ENCODE measurements at regions of chr12 and their contacts with region 1.

Region 1: GRCh38 chr12:26884765-26885576 is 52.0 kb upstream of the ITPR2 start:
- DNase-seq: peak; percentile 42
- H3K4me3 ChIP-seq: no peak overlapping the region
- H3K27ac ChIP-seq: no peak overlapping the region
- H3K27me3 ChIP-seq: no peaks in the 10 kb centered on the region
- CTCF ChIP-seq: peak; percentile 99

Region 2: GRCh38 chr12:25875666-25876065 is 1009.3 kb before region 1 on chr12:
- CTCF ChIA-PET with region 1: no interaction called
- POLR2A ChIA-PET with region 1: no interaction called
- DNase-seq: no peak
- H3K4me3 ChIP-seq: no peak overlapping the region
- H3K27ac ChIP-seq: no peak overlapping the region
- H3K27me3 ChIP-seq: no peaks in the 10 kb centered on the region
- CTCF ChIP-seq: no peak

Region 3: DNA sequence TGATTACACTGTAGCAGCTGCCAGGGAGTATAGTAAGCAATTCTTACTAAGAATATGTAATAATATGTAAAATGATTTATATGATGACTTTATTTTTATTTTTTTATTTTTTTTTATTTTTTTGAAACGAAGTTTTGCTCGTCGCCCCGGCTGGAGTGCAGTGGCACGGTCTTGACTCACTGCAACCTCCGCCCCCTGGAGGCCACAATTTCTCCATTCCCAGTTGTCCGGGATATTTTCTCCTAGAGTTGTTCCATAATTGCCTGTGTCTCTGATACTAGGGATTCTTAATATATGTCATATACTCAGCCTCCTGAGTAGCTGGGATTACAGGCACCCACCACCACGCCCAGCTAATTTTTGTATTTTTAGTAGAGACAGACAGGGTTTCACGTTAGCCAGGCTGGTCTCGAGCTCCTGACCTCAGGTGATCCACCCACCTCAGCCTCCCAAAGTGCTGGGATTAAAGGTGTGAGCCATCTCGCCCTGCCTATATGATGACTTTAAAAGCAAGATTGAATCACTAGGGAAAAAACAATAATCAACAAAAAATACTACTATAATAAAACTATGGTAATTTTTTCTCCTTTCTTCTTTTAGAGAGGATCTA is 39.8 kb before region 1 on chr12:
- CTCF ChIA-PET with region 1: interaction called, 10 read pairs
- POLR2A ChIA-PET with region 1: no interaction called
- DNase-seq: no peak
- H3K4me3 ChIP-seq: no peak overlapping the region
- H3K27ac ChIP-seq: no peak overlapping the region
- H3K27me3 ChIP-seq: no peaks in the 10 kb centered on the region
- CTCF ChIP-seq: peak; percentile 58

Region 4: GRCh38 chr12:26863502-26863901 is 21.5 kb before region 1 on chr12:
- CTCF ChIA-PET with region 1: interaction called, 21 read pairs
- POLR2A ChIA-PET with region 1: no interaction called
- DNase-seq: no peak
- H3K4me3 ChIP-seq: no peak overlapping the region
- H3K27ac ChIP-seq: no peak overlapping the region
- H3K27me3 ChIP-seq: peaks cover 2% of the 10 kb centered on the region
- CTCF ChIP-seq: peak; percentile 45

Region 5: GRCh38 chr12:26896913-26897312 is 11.9 kb after region 1 on chr12:
- CTCF ChIA-PET with region 1: interaction called, 30 read pairs
- POLR2A ChIA-PET with region 1: no interaction called
- DNase-seq: no peak
- H3K4me3 ChIP-seq: no peak overlapping the region
- H3K27ac ChIP-seq: no peak overlapping the region
- H3K27me3 ChIP-seq: no peaks in the 10 kb centered on the region
- CTCF ChIP-seq: no peak

Region 6: DNA sequence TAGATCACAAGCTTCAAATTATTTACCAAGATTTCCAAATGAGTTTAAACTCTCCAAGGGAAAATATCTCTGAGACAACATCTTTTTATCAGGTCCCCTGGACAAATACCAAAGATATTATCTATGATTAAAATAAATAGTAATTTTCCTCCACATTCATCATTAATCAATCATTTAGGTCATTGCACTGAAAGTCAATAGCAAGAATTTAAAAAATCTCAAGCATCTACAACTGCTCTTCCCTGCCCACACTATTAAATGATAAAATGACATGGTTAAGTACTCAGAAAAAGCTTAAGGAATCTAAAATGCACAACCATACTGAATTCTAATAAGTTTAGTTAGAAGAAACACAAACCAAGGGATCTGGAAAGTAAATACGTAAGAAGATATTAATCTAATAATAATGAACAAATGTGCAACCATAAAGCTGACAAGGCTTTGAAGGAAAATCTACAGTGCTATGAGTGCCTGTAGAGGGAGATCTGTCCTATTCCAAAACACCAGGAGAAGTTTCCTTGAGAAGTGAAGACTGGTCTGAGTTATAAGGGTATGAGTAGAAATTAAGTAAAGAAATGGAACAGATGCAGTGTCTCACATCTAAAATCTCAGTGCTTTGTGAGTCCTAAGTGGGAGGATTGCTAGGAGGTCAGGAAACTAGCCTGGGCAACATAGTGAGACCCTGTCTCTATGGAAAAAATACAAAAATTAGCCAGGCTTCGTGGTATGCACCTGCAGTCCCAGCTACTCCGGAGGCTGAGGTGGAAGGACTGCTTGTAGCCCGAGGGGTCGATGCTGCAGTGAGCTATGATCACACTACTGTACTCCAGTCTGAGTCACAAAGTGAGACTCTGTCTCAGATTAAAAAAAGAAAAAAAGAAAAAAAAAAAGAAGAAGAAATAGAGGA is 33.6 kb after region 1 on chr12:
- CTCF ChIA-PET with region 1: interaction called, 12 read pairs
- POLR2A ChIA-PET with region 1: no interaction called
- DNase-seq: no peak
- H3K4me3 ChIP-seq: no peak overlapping the region
- H3K27ac ChIP-seq: no peak overlapping the region
- H3K27me3 ChIP-seq: no peaks in the 10 kb centered on the region
- CTCF ChIP-seq: peak; percentile 31

Region 7: GRCh38 chr12:27984275-27984674 is 1099.3 kb after region 1 on chr12:
- CTCF ChIA-PET with region 1: no interaction called
- POLR2A ChIA-PET with region 1: no interaction called
- DNase-seq: no peak
- H3K4me3 ChIP-seq: no peak overlapping the region
- H3K27ac ChIP-seq: no peak overlapping the region
- H3K27me3 ChIP-seq: no peaks in the 10 kb centered on the region
- CTCF ChIP-seq: no peak

Measured in AG04450 (cell line).